HepG2 (cell line): ENCODE measurements at regions of chr5 and their contacts with region 1.

Region 1: DNA sequence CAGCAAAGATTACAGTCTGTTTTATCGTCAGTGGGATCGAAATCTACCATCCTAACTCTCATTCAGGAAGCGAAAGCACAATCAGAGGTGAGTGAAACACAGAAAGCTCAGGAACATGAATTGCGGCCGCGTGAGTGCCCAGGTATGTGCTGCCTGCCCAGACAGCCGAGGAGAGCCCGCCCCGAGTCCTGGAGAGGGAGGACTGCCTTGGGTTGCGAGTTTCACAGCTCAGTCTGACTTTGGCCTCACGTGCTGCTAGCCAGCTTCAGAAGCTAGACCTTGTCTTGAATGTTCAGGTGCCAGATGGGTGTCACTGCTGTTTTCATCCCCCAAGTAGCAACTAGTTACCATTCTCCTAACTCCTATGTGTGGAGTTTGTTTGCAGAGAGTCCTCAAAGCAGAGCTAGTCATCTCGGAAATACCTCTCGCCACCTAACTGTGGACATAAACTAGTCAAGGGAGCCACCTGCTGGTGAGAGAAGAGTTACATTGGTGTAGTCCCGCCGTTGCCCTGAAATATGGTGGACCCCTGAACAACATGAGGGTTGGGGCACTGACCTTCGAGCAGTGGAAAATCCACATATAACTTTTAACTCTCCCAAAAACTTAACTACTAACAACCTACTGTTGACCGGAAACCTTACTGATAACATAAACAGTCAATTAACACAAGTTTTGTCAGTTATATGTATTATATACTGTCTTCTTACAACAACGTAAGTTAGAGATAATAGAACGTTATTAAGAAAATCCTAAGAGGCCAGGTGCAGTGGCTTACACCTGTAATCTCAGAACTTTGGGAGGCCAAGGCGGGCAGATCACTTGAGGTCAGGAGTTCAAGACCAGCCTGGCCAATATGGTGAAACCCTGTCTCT is 80.9 kb downstream of the GOLPH3 start:
- DNase-seq: peak; percentile 75
- ATAC-seq: peak; percentile 84
- H3K4me3 ChIP-seq: no peak overlapping the region
- H3K27ac ChIP-seq: no peak overlapping the region
- H3K4me1 ChIP-seq: peaks cover 16% of the 10 kb centered on the region
- H3K27me3 ChIP-seq: no peaks in the 10 kb centered on the region
- CTCF ChIP-seq: peak; percentile 88
- EP300 ChIP-seq: no peak
- POLR2A ChIP-seq: no peak
- RAD21 ChIP-seq: peak; percentile 69

Region 2: DNA sequence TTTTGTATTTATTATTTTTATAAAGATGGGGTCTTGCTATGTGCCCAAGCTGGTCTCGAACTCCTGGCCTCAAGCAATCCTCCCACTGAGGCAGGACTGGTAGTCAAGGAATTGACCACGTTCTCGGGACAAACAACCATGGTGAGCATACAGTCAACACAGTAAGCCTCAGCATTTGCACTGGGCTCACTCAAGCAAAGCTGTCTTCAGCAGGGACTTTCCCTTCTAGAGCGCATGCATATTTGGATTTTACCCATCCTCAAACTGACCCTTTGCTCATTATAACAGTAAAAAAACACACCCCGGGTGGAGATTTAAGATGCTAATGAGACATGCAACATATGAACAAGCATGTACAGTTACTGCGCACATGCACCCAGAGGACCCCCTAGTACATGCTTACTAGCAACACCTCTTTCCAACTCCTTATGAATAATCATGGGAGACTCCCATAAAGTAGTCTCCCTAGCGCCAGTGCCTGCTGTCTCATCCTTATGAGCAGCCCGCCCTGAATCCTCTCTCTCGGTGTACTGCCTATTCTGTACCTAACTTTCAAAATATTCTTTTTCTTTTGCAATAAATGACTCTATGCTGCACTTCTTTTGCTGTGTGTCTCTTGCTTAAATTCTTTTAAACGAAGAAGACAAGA is 519.6 kb before region 1 on chr5:
- CTCF ChIA-PET with region 1: no interaction called
- POLR2A ChIA-PET with region 1: no interaction called
- in situ Hi-C with region 1: loop called (anchors 10 kb)
- intact Hi-C with region 1: no loop called
- DNase-seq: no peak
- ATAC-seq: no peak
- H3K4me3 ChIP-seq: no peak overlapping the region
- H3K27ac ChIP-seq: no peak overlapping the region
- H3K4me1 ChIP-seq: no peaks in the 10 kb centered on the region
- H3K27me3 ChIP-seq: no peaks in the 10 kb centered on the region; a peak in 1 of 5 replicates
- CTCF ChIP-seq: no peak
- EP300 ChIP-seq: no peak
- POLR2A ChIP-seq: no peak
- RAD21 ChIP-seq: no peak

Region 3: GRCh38 chr5:31581498-31582099 is 511.6 kb before region 1 on chr5:
- CTCF ChIA-PET with region 1: no interaction called
- POLR2A ChIA-PET with region 1: no interaction called
- in situ Hi-C with region 1: loop called (anchors 10 kb)
- intact Hi-C with region 1: loop called (anchors 5 kb)
- DNase-seq: peak; percentile 10
- ATAC-seq: no peak
- H3K4me3 ChIP-seq: no peak overlapping the region
- H3K27ac ChIP-seq: no peak overlapping the region
- H3K4me1 ChIP-seq: no peaks in the 10 kb centered on the region
- H3K27me3 ChIP-seq: peaks cover 2 to 6% of the 10 kb centered on the region in 2 experiments; a peak in 2 of 5 replicates
- CTCF ChIP-seq: peak; percentile 42
- EP300 ChIP-seq: no peak
- POLR2A ChIP-seq: no peak
- RAD21 ChIP-seq: no peak

Region 4: DNA sequence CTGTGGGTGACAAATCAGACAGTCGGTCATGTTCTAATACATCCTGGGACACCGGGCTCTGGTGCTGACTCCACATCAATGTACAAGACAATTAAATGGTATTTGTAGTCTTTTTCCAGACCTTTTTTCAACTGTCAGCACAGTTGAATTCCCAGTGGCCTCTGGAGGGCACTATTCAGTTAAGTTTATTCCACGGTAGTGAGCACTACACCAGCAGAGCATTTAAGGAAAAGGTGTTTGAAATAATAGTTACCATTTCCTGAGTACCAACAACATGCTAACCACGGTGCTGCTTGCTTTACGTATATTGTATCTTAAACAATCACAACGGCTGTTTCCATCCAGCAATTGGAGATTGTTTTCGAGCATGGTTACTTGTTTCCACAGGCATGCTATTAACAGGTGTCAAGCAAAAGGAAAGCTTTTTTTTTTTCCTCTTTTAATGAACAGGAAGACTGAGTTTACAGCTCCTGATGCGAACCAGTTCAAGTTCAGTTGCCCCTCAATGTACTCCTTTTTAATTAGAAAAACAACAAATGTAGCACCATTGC is 267.6 kb before region 1 on chr5:
- CTCF ChIA-PET with region 1: interaction called, 14 read pairs
- POLR2A ChIA-PET with region 1: no interaction called
- in situ Hi-C with region 1: no loop called
- intact Hi-C with region 1: loop called (anchors 1 kb)
- DNase-seq: peak; percentile 41
- ATAC-seq: peak; percentile 95
- H3K4me3 ChIP-seq: no peak overlapping the region
- H3K27ac ChIP-seq: no peak overlapping the region
- H3K4me1 ChIP-seq: no peaks in the 10 kb centered on the region
- H3K27me3 ChIP-seq: no peaks in the 10 kb centered on the region
- CTCF ChIP-seq: peak; percentile 67
- EP300 ChIP-seq: no peak
- POLR2A ChIP-seq: no peak
- RAD21 ChIP-seq: peak; percentile 39; the same call in 1 of the 2 replicates

Region 5: GRCh38 chr5:31934156-31934555 is 159.0 kb before region 1 on chr5:
- CTCF ChIA-PET with region 1: no interaction called
- POLR2A ChIA-PET with region 1: no interaction called
- in situ Hi-C with region 1: no loop called
- intact Hi-C with region 1: loop called (anchors 1 kb)
- DNase-seq: no peak
- ATAC-seq: no peak
- H3K4me3 ChIP-seq: no peak overlapping the region
- H3K27ac ChIP-seq: no peak overlapping the region
- H3K4me1 ChIP-seq: no peaks in the 10 kb centered on the region
- H3K27me3 ChIP-seq: peaks cover 4 to 16% of the 10 kb centered on the region in 2 experiments; a peak in 3 of 5 replicates
- CTCF ChIP-seq: no peak
- EP300 ChIP-seq: no peak
- POLR2A ChIP-seq: no peak
- RAD21 ChIP-seq: no peak

Region 6: GRCh38 chr5:32304622-32305021 is 211.4 kb after region 1 on chr5:
- CTCF ChIA-PET with region 1: no interaction called
- POLR2A ChIA-PET with region 1: no interaction called
- in situ Hi-C with region 1: no loop called
- intact Hi-C with region 1: no loop called
- DNase-seq: no peak
- ATAC-seq: no peak; the same call in 2 of the 3 replicates
- H3K4me3 ChIP-seq: no peak overlapping the region
- H3K27ac ChIP-seq: no peak overlapping the region
- H3K4me1 ChIP-seq: peaks cover 73% of the 10 kb centered on the region
- H3K27me3 ChIP-seq: no peaks in the 10 kb centered on the region
- CTCF ChIP-seq: no peak
- EP300 ChIP-seq: no peak
- POLR2A ChIP-seq: no peak
- RAD21 ChIP-seq: no peak